HEK293 (cell line): ENCODE measurements at regions of chr1 and their contacts with region 1.

Region 1: GRCh38 chr1:95084317-95085176 is 11.8 kb upstream of the ALG14 start:
- H3K4me3 ChIP-seq: no peak overlapping the region
- H3K27ac ChIP-seq: no peak overlapping the region
- H3K4me1 ChIP-seq: no peaks in the 10 kb centered on the region
- CTCF ChIP-seq: no peak

Region 2: GRCh38 chr1:95072532-95073419 is 11.8 kb before region 1 on chr1 and contains the start of gene ALG14:
- CTCF ChIA-PET with region 1: interaction called, 42 read pairs
- POLR2A ChIA-PET with region 1: interaction called, 5 read pairs
- H3K4me3 ChIP-seq: peak within 1 kb of the TSS; percentile 91
- H3K27ac ChIP-seq: peak within 1 kb of the TSS; percentile 61
- H3K4me1 ChIP-seq: peaks cover 3% of the 10 kb centered on the region; the same call in 1 of the 2 replicates
- CTCF ChIP-seq: no peak

Region 3: DNA sequence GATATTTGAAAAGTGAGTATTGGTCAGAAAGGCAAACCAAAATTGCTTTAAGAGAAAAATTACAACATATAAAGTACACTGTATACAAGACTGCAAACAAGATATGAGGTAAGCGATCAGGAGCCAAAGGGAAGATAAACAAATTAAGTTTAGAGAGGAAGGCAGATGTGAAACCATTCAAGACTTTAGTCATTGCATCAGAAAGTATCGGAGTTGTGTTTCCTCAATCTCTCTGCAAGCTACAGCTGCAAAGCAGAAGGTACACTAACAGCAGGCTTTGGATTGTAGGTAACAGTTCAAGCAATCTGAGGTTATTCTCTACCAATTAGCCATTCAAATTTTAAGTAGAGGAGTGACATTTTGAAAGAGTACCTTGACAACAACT is 11.3 kb after region 1 on chr1:
- CTCF ChIA-PET with region 1: interaction called, 16 read pairs
- POLR2A ChIA-PET with region 1: interaction called, 3 read pairs
- H3K4me3 ChIP-seq: no peak overlapping the region
- H3K27ac ChIP-seq: no peak overlapping the region
- H3K4me1 ChIP-seq: no peaks in the 10 kb centered on the region
- CTCF ChIP-seq: no peak

Region 4: GRCh38 chr1:95116580-95117206 is 32.1 kb after region 1 on chr1:
- CTCF ChIA-PET with region 1: interaction called, 29 read pairs
- POLR2A ChIA-PET with region 1: interaction called, 3 read pairs
- H3K4me3 ChIP-seq: peak overlapping the region; percentile 73
- H3K27ac ChIP-seq: peak overlapping the region; percentile 84; the same call in 1 of the 2 replicates
- H3K4me1 ChIP-seq: no peaks in the 10 kb centered on the region
- CTCF ChIP-seq: peak; percentile 88

Region 5: DNA sequence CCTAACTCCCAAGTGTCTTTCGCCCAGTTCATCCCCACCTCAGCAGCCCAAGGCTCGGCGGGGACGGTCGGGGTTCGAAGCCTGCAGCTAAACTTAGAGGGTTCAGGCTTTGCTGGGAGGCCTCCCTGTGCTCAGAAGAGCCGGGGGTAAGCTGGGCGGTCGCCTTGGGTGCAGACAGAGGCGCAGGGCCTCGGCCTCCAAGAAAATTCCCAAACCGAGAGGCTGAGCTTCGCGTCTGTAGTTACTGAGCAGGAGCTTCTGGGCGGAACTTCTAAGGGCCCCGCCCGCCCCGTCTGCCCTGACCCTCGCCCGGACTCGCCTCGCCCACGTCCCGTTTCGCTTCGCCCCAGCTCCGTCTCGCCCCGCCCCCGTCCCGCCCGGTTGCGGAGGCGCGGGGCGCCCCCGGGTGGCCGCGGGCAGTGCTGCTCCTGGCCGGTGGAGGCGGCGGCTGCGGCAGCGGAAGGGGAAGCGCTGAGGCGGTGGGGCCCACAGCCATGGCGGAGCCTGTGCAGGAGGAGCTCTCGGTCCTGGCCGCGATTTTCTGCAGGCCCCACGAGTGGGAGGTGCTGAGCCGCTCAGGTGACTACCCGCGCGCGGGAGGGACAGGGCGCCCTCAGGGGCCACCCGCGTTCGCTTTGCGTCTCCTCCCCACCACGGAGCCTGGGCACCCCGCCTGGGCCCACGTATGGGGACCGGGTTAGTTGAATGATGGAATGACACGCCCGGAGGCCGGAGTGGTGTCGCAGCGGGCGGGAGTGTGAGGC is 149.4 kb after region 1 on chr1 and contains the start of gene RWDD3:
- CTCF ChIA-PET with region 1: interaction called, 30 read pairs
- POLR2A ChIA-PET with region 1: interaction called, 6 read pairs
- H3K4me3 ChIP-seq: peak within 1 kb of the TSS; percentile 98
- H3K27ac ChIP-seq: peak within 1 kb of the TSS; percentile 70; the same call in 1 of the 2 replicates
- H3K4me1 ChIP-seq: no peaks in the 10 kb centered on the region
- CTCF ChIP-seq: peak; percentile 76

Region 6: GRCh38 chr1:95534985-95535384 is 450.4 kb after region 1 on chr1:
- CTCF ChIA-PET with region 1: no interaction called
- POLR2A ChIA-PET with region 1: no interaction called
- H3K4me3 ChIP-seq: no peak overlapping the region
- H3K27ac ChIP-seq: no peak overlapping the region
- H3K4me1 ChIP-seq: no peaks in the 10 kb centered on the region
- CTCF ChIP-seq: no peak